Activated naive CD4-positive, alpha-beta T cell treated with anti-CD3 and anti-CD28 coated beads for 36 hours (primary cell): ENCODE measurements at regions of chr12 and their contacts with region 1.

Region 1: GRCh38 chr12:56571126-56571525 is 49.5 kb downstream of the RBMS2 start:
- DNase-seq: no peak
- H3K4me3 Mint-ChIP-seq: no peak overlapping the region
- H3K27ac Mint-ChIP-seq: no peak overlapping the region
- H3K4me1 Mint-ChIP-seq: peaks cover 29% of the 10 kb centered on the region
- H3K27me3 Mint-ChIP-seq: no peaks in the 10 kb centered on the region

Region 2: DNA sequence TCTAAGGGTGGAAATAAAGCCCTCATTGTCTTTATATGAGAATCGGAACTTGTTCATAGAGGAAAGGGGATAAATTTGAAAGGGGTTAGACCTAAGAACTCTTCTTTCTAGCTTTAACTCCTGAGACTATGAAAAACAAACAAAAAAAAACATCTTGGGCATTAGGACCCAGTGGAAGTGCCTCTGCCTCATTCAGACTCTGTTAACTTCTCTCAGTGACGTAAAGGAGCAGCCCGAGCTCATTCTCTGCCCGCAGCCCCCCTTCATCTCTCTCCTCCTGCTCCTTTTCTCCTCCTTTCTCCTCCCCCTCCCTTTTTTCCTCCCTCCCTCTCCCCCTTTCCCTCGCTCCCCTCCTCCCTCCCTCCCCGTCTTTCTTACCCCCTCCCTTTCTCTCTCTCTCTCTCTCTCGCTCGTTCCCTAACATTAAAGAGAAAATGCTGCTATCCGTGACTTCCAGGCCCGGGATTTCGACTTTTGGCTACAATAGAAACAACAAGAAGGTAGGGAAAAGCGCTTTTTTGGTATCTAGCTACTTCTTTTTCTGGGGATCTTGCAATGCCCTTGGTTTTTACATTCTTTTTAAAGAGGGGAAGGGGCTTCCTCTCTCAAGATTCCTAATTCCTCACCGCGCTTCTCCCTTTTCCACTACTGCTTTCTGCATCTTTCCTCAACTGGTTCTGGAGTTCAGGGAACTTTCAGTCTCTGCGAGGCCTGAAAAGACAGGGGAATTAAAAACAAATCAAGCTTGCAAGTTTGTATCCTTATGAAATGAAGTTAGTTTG is 49.3 kb before region 1 on chr12 and contains the start of gene RBMS2:
- CTCF ChIA-PET with region 1: interaction called, 62 read pairs
- intact Hi-C with region 1: loop called (anchors 2 kb)
- DNase-seq: peak; percentile 56
- H3K4me3 Mint-ChIP-seq: peak within 1 kb of the TSS; percentile 62
- H3K27ac Mint-ChIP-seq: no peak within 1 kb of the TSS
- H3K4me1 Mint-ChIP-seq: peaks cover 28% of the 10 kb centered on the region
- H3K27me3 Mint-ChIP-seq: no peaks in the 10 kb centered on the region
- total RNA-seq, gene RBMS2: 2.5 to 5.1 TPM

Region 3: DNA sequence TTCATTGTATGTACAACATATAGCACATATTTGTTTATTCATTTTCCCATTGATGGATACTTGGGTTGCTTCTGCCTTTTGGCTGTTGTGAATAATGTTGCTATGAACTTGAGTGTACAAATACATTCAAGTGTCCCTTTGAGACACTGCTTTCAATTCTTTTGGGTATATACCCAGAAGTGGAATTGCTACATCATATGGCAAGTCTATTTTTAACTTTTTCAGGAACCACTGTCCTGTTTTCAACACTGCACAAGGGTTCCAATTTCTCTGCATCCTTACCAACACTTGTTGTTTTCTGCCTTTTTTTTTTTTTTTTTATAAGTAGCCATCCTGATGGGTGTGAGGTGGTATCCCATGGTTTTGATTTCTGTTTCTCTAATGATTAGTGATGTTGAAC is 33.6 kb before region 1 on chr12:
- CTCF ChIA-PET with region 1: interaction called, 4 read pairs
- intact Hi-C with region 1: loop called (anchors 5 kb)
- DNase-seq: no peak
- H3K4me3 Mint-ChIP-seq: no peak overlapping the region
- H3K27ac Mint-ChIP-seq: no peak overlapping the region
- H3K4me1 Mint-ChIP-seq: no peaks in the 10 kb centered on the region
- H3K27me3 Mint-ChIP-seq: no peaks in the 10 kb centered on the region

Region 4: GRCh38 chr12:56581418-56582145 is 10.5 kb after region 1 on chr12:
- CTCF ChIA-PET with region 1: interaction called, 11 read pairs
- intact Hi-C with region 1: no loop called
- DNase-seq: peak; percentile 33
- H3K4me3 Mint-ChIP-seq: no peak overlapping the region
- H3K27ac Mint-ChIP-seq: no peak overlapping the region
- H3K4me1 Mint-ChIP-seq: peaks cover 19% of the 10 kb centered on the region
- H3K27me3 Mint-ChIP-seq: no peaks in the 10 kb centered on the region

Region 5: GRCh38 chr12:56593909-56594621 is 22.9 kb after region 1 on chr12:
- CTCF ChIA-PET with region 1: interaction called, 18 read pairs
- intact Hi-C with region 1: loop called (anchors 1 kb)
- DNase-seq: peak; percentile 74
- H3K4me3 Mint-ChIP-seq: no peak overlapping the region
- H3K27ac Mint-ChIP-seq: no peak overlapping the region
- H3K4me1 Mint-ChIP-seq: no peaks in the 10 kb centered on the region
- H3K27me3 Mint-ChIP-seq: no peaks in the 10 kb centered on the region